Esophagus muscularis mucosa (tissue), 4 donors: ENCODE measurements at regions of chr7 and their contacts with region 1.

Region 1: DNA sequence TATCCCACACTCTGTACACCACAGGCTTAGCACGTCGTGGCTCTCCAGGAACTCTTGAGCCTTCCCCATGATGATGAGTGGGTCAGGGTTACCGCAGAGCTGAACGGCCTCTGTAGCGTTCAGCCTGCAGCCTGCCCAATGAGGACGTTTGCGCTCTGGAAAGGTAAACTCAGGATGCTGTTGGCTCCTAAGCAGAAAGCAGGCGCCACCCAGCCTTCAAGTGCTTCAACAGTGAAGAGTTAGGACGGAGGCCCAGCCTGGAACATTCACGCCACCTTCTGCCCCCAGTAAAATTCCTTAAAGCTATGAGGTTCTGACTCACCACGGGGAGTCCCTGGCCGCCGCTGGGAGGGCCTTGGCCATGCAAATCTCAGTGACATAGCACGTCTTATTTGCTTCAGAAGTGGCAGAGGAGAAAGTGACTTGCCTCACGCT is 161.5 kb upstream of the SH2B2 start:
- DNase-seq: peak; percentile 93
- H3K4me3 ChIP-seq: no peak overlapping the region
- H3K27ac ChIP-seq: peak overlapping the region; percentile 4 to 63 (median 48)
- H3K4me1 ChIP-seq: peaks cover 4 to 27% (median 16%) of the 10 kb centered on the region in 4 donors
- H3K27me3 ChIP-seq: no peaks in the 10 kb centered on the region
- CTCF ChIP-seq: peak; percentile 16 to 36 (median 25)
- EP300 ChIP-seq: no peak
- POLR2A ChIP-seq: no peak

Region 2: DNA sequence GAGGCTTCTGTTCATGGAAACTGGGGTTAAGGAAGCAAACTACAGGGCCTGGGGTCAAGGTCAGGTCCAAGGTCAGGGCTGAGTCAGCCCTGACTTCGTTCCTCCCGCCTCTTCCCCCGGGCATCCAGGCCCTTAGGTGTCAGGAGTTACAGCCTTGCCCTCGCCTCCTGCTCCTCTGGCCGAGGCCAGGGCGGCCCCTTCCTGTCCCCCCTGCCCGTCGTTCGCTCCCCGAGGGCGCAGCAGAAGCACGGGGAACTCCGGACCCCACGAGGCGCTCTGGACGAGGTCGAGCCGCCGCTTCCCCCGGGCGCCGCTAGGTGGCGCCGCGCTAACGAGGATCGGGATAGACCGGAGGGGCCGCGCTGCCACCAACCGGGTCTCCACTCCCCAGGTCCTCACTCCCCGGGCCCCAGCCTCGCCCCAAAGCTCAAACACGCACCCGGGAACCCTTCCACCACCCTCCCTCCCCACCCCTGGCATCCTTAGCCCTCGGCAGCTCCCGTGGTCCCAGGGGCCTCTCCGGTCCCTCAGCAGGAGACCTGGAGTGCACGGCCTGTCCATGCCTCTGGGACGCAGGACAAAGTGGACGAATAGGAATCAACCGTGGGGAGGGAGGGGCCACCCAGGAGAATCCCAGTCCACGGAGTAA is 436.8 kb before region 1 on chr7:
- intact Hi-C with region 1: loop called (anchors 5 kb)
- DNase-seq: peak; percentile 94
- H3K4me3 ChIP-seq: peak overlapping the region; percentile 30 to 48 (median 38)
- H3K27ac ChIP-seq: peak overlapping the region in 1 of 4 donors; percentile 24
- H3K4me1 ChIP-seq: peaks cover 10 to 14% (median 13%) of the 10 kb centered on the region in 4 donors
- H3K27me3 ChIP-seq: peaks cover 0 to 11% (median 0%) of the 10 kb centered on the region in 4 donors
- CTCF ChIP-seq: peak; percentile 90 to 99 (median 95)
- EP300 ChIP-seq: no peak
- POLR2A ChIP-seq: no peak

Region 3: DNA sequence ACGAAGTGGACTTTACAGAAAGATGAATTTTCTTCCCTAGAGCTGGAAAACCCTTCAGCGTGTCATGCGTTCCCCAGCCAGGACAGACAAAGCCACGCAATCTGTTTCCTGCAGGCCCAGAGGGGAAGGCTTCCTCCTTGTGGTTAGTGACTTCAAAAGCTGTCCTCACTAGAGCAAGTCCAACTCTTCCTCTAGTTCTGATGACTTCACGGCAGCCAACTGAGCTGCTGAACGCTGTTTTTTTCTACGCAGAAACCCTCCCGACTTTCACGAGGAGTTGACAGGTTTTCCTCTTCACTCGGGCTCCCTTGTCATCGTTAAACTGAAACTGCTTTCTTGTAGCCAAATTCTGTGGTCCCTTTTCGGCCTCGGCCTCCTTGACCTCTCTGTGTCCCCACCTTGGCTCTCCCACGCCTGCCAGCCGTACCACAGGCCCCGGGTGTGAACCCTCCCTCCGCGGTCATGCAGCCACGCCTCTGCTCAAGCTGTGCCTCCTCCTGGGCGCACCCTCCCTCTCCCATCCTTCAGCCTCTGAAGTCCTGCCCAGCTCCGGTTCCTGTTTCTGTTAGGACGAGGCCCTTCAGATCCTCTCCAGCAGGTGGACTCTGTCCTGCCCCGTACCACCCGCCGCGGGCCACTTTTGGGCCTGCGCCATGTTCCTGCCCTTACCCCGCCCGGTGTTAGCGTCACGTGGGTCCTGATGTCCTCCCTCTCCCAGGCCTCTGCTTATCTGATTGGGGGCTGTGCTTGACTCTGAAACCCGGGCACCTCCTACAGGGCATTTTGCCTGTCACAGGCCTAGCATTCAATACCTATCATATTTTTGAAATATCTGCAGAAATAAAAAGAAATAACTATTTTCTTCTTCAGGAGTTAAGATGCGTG is 268.4 kb before region 1 on chr7:
- intact Hi-C with region 1: loop called (anchors 10 kb)
- DNase-seq: peak; percentile 97
- H3K4me3 ChIP-seq: peak overlapping the region; percentile 40 to 48 (median 44)
- H3K27ac ChIP-seq: peak overlapping the region; percentile 80 to 87 (median 84)
- H3K4me1 ChIP-seq: peaks cover 54 to 81% (median 71%) of the 10 kb centered on the region in 4 donors
- H3K27me3 ChIP-seq: no peaks in the 10 kb centered on the region
- CTCF ChIP-seq: peak; percentile 13 to 52 (median 37)
- EP300 ChIP-seq: no peak
- POLR2A ChIP-seq: no peak

Region 4: GRCh38 chr7:101953248-101953819 is 171.8 kb before region 1 on chr7:
- intact Hi-C with region 1: loop called (anchors 10 kb)
- DNase-seq: no peak
- H3K4me3 ChIP-seq: peak overlapping the region in 2 of 4 donors; percentile 5 to 15
- H3K27ac ChIP-seq: peak overlapping the region; percentile 82 to 92 (median 86)
- H3K4me1 ChIP-seq: peaks cover 57 to 86% (median 76%) of the 10 kb centered on the region in 4 donors
- H3K27me3 ChIP-seq: no peaks in the 10 kb centered on the region
- CTCF ChIP-seq: peak in 2 of 3 experiments; percentile 14 to 20
- EP300 ChIP-seq: peak; percentile 43
- POLR2A ChIP-seq: no peak